OCI-LY7 (cell line): ENCODE measurements at regions of chr16 and their contacts with region 1.

Region 1: GRCh38 chr16:29700253-29700987 is 21.4 kb downstream of the QPRT start:
- DNase-seq: peak; percentile 74
- H3K4me3 ChIP-seq: no peak overlapping the region
- H3K27ac ChIP-seq: no peak overlapping the region
- H3K4me1 ChIP-seq: peaks cover 26% of the 10 kb centered on the region
- CTCF ChIP-seq: peak; percentile 89

Region 2: DNA sequence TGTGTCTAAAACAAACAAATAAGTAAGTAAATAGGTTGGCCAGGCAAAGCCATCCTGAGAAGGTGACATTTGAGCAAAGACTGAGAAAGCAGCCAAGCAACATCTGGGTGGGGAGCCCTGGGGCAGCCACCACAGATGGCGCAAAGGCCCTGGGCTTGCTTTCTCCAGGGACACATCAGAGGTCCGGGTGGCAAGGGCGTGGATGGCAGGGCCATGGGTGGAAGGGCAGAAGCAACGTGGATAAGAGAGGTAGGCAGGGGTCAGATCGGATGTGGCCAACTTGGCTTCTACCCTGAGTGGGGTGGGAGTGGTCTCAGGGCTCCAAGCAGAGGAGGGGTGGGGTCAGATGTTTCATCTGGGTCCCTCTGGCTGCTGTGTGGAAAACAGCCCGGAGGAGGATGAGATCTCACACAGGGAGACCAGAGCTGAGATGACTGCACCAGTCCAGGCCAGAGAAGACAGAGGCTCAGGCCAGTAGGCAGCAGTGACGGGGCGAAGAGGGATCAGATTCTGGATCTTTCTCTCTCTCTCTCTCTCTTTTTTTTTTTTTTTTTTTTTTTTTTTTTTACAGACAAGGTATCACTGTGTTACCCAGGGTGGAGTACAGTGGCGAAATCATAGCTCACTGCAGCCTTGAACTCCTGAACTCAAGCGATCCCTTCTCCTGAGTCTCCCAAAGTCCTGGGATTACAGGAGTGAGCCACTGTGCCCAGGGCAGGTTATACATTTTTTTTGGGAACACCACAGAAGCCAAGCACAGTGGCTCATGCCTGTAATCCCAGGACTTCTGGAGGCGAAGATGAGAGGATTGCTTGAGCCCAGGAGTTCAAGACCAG is 43.5 kb before region 1 on chr16:
- CTCF ChIA-PET with region 1: no interaction called
- POLR2A ChIA-PET with region 1: no interaction called
- intact Hi-C with region 1: no loop called
- DNase-seq: no peak
- H3K4me3 ChIP-seq: no peak overlapping the region
- H3K27ac ChIP-seq: no peak overlapping the region
- H3K4me1 ChIP-seq: peaks cover 19% of the 10 kb centered on the region
- CTCF ChIP-seq: no peak

Region 3: DNA sequence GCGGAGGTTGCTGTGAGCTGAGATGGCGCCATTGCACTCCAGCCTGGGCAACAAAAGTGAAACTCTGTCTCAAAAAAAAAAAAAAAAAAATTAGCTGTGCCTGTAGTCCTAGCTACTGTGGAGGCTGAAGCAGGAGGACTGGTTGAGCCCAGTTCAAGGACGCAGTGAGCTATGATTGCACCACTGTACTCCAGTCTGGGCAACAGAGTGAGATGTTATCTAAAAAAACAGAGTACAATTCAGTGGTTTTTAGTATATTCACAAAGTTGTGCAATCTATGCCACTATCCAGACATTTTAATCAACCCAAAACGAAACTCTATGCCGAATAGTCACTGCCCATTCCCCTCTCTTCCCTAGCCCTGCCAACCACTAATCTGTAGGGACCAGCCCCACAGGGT is 20.3 kb after region 1 on chr16:
- CTCF ChIA-PET with region 1: no interaction called
- POLR2A ChIA-PET with region 1: interaction called, 3 read pairs
- intact Hi-C with region 1: loop called (anchors 2 kb)
- DNase-seq: no peak
- H3K4me3 ChIP-seq: no peak overlapping the region
- H3K27ac ChIP-seq: no peak overlapping the region
- H3K4me1 ChIP-seq: no peaks in the 10 kb centered on the region
- CTCF ChIP-seq: no peak

Region 4: DNA sequence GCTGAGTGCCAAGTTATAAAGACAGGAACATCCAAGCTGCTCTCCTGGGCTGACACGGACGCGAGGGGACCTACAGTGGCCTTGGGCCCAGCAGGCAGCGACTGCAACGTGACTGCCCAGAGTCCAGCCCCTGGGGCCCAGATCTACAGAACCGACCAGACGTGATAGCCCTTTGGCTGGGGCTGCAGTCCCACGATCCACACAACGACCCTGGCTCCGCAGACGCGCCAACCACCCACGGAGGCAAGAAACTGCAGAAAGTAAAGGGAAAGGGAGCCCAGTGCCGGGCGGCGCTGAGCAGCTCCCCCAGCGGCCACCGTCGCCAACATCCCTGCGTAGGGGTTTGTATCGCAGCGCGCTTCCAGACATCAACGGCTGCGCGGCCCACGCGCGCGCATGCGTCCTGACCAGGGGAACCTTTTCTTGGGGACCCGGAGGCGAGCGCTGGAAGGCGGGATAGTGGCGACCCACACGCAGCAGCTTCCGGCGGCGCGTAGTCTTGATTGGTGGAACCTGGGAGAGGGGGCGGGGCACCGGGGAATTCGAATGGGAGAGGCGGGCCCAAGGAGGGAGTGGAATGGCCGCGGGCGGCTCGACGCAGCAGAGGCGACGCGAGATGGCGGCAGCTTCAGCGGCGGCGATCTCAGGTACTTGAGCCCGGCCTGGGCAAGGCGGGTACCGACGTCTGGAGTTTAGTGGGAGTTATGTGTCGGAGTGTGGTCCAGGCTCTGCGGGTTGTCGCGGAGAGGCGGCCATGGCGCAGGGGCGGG is 89.9 kb after region 1 on chr16 and contains the start of gene KIF22:
- CTCF ChIA-PET with region 1: interaction called, 3 read pairs
- POLR2A ChIA-PET with region 1: no interaction called
- intact Hi-C with region 1: loop called (anchors 1 kb)
- DNase-seq: peak; percentile 99
- H3K4me3 ChIP-seq: peak within 1 kb of the TSS; percentile 79
- H3K27ac ChIP-seq: peak within 1 kb of the TSS; percentile 72
- H3K4me1 ChIP-seq: peaks cover 32% of the 10 kb centered on the region
- CTCF ChIP-seq: peak; percentile 82
- total RNA-seq, gene KIF22: 315 and 339 TPM in 2 replicates

Region 5: DNA sequence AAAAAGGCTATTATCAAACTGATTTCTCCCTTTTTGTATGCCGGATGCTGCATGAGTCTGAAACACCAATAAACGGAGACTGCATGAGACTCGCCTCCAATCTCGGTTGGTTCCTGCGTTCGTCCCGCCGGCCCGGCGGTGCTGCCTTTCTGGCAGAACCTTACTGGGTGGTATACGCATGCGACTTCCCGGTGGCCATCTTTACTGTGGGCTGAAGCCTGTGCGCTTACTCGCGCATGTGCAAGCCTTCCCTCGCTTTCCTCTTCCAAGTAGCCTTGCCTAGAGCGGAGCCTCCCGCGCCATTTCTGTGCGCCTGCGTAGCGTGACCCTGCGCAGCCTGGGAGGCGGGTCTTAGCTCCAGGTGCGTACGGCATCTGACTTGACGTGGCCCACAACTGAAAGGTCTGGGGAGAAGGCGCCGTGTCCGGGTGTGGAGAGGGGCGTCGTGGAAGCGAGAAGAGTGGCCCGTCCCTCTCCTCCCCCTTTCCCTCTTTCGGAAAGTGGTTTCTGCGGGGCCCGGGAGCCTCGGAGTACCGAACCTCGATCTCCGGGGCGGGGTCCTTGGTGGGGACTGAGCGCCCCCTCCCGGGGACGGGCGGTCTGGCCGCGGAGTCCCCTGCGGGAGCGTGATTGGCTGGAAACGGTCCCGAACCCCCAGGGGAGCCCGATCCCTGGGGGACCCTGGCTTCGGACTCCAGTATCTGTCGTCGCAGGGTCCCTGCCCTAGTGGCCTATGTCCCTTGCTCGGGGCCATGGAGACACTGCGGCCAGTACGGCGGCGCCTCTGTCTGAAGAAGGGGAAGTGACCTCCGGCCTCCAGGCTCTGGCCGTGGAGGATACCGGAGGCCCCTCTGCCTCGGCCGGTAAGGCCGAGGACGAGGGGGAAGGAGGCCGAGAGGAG is 115.6 kb after region 1 on chr16 and contains the start of gene PAGR1:
- CTCF ChIA-PET with region 1: no interaction called
- POLR2A ChIA-PET with region 1: no interaction called
- intact Hi-C with region 1: loop called (anchors 1 kb)
- DNase-seq: peak; percentile 100
- H3K4me3 ChIP-seq: peak within 1 kb of the TSS; percentile 89
- H3K27ac ChIP-seq: peak within 1 kb of the TSS; percentile 72
- H3K4me1 ChIP-seq: peaks cover 56% of the 10 kb centered on the region
- CTCF ChIP-seq: peak; percentile 87
- total RNA-seq, gene PAGR1: 59.4 and 62.7 TPM in 2 replicates

Region 6: GRCh38 chr16:29862884-29863668 is 162.7 kb after region 1 on chr16 and contains the start of gene CDIPT:
- CTCF ChIA-PET with region 1: no interaction called
- POLR2A ChIA-PET with region 1: no interaction called
- intact Hi-C with region 1: no loop called
- DNase-seq: peak; percentile 99
- H3K4me3 ChIP-seq: peak within 1 kb of the TSS; percentile 91
- H3K27ac ChIP-seq: peak within 1 kb of the TSS; percentile 45
- H3K4me1 ChIP-seq: peaks cover 15% of the 10 kb centered on the region
- CTCF ChIP-seq: peak; percentile 78
- total RNA-seq, gene CDIPT: 39.6 and 52.4 TPM in 2 replicates

Region 7: GRCh38 chr16:29909391-29909790 is 209.0 kb after region 1 on chr16:
- CTCF ChIA-PET with region 1: no interaction called
- POLR2A ChIA-PET with region 1: no interaction called
- intact Hi-C with region 1: no loop called
- DNase-seq: no peak
- H3K4me3 ChIP-seq: no peak overlapping the region
- H3K27ac ChIP-seq: no peak overlapping the region
- H3K4me1 ChIP-seq: no peaks in the 10 kb centered on the region
- CTCF ChIP-seq: no peak

Region 8: GRCh38 chr16:30018731-30019158 is 318.3 kb after region 1 on chr16:
- CTCF ChIA-PET with region 1: no interaction called
- POLR2A ChIA-PET with region 1: no interaction called
- intact Hi-C with region 1: loop called (anchors 2 kb)
- DNase-seq: no peak
- H3K4me3 ChIP-seq: no peak overlapping the region
- H3K27ac ChIP-seq: no peak overlapping the region
- H3K4me1 ChIP-seq: no peaks in the 10 kb centered on the region
- CTCF ChIP-seq: no peak